AG04449 (cell line): ENCODE measurements at regions of chr6 and their contacts with region 1.

Region 1: DNA sequence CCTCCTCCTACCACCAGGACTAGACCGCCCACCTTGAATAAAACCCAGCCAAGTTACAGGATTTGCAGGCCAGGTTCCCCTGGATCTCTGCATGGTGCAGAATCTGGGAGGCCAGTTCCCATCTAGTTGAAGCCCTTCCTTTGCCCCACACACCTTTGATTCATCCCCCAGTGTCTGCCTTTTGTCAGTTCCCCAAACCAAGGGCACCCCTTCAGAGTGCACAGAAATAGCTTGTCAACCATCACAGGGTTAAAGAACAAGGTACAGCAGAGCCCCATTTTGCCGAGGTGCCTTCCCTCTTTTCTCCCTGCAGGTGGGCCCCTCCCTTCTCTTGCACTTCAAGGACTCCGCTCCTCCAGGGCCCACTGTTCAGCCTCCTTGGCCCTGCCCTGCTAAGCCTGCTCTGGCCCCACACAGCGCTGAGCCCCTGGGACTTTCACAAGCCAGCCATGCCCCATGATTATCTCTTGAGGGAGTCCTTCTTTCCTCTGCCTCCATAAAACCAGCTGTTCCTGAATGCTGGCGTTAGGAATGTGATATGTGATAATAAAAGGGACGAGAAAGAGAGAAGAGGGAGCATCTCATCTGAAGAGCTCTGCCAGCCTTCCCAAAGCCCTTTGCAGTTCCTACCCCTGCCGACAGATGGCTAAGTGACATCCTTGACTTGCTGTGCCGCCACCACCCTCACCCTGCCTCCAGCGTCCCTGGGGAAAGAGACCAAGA is 280.3 kb downstream of the CDC5L start:
- DNase-seq: no peak
- H3K4me3 ChIP-seq: no peak overlapping the region
- CTCF ChIP-seq: peak; percentile 60

Region 2: GRCh38 chr6:44606504-44606903 is 61.3 kb before region 1 on chr6:
- CTCF ChIA-PET with region 1: no interaction called
- POLR2A ChIA-PET with region 1: no interaction called
- DNase-seq: no peak
- H3K4me3 ChIP-seq: no peak overlapping the region
- CTCF ChIP-seq: no peak

Region 3: GRCh38 chr6:44680409-44680720 is 12.5 kb after region 1 on chr6:
- CTCF ChIA-PET with region 1: interaction called, 17 read pairs
- POLR2A ChIA-PET with region 1: no interaction called
- DNase-seq: no peak
- H3K4me3 ChIP-seq: no peak overlapping the region
- CTCF ChIP-seq: no peak